ENCODE measurements at regions of chr12 and their contacts with region 1.

Region 1: DNA sequence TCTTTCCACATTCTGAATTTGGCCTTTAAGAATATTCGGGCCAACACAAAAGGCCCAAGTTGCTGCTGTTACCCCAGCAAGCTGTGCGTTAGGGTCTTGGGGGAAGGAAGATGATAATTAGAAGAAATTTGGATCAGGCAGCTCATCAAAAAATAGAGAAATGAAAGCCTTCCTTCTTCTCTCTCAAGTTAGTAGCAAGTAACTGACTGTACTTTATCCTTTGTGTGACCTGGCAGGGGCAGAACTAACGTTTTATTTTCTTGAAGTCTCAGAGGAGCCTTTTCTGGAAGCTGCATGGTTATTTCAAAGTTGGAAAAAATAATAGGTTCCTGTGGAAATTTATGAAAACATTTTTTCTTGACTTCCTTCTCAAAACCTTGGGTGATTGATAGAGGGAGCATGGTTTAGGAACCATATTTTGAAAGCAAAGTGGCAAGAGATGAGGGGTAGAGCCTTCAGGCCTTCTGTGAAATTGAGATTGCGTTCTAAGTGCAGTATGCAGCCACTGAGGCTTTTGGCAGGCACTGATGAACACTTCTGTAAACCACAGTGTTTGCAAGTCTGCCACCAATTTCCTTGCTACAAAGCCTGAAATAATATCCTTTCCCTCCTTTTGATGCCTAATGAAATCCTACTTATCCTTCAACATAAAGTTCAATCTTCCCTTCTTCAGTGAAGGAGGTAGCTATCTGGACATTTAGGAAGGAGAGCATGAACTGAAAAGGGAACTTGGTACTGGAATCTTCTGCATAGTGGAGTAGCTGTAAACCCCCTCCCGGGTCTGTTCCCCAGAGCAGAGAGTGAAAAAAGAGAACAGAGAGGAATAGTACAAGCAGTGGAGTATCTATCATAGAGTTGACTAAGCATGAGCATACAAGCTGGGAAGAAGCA is 123.2 kb downstream of the FGD4 start:
- DNase-seq: no peak
- H3K4me3 ChIP-seq: peak overlapping the region in 1 of 2 donors; percentile 15
- H3K27ac ChIP-seq: peak overlapping the region; percentile 63 to 83
- H3K4me1 ChIP-seq: peaks cover 0 to 32% of the 10 kb centered on the region in 2 donors
- H3K27me3 ChIP-seq: no peaks in the 10 kb centered on the region
- CTCF ChIP-seq: no peak

Region 2: GRCh38 chr12:32501835-32502333 is 20.7 kb before region 1 on chr12:
- intact Hi-C with region 1: loop called (anchors 2 kb)
- DNase-seq: no peak
- H3K4me3 ChIP-seq: peak overlapping the region in 1 of 2 donors; percentile 7
- H3K27ac ChIP-seq: peak overlapping the region; percentile 18 to 19
- H3K4me1 ChIP-seq: peaks cover 3 to 22% of the 10 kb centered on the region in 2 donors
- H3K27me3 ChIP-seq: no peaks in the 10 kb centered on the region
- CTCF ChIP-seq: no peak

Region 3: DNA sequence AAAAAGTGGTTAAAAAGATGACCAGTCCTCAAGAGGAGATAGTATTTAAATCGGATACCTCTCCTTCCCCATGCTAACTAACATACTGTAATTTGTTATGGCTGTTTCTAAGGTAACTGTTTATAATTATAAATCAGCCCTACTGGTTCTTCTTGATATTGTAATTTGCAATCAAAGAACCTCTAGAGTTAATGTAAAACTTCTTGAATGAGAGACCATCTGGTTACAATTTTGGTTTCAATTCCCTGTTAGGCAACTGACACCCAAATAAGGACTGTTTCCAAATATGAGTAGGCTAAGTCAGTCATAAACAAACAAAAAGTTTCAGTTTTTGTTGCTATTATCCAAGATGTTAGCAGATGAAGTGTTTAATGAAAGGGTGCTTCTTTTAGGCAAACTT is 36.3 kb after region 1 on chr12:
- intact Hi-C with region 1: no loop called
- DNase-seq: no peak
- H3K4me3 ChIP-seq: peak overlapping the region in 1 of 2 donors; percentile 6
- H3K27ac ChIP-seq: peak overlapping the region in 1 of 2 donors; percentile 42
- H3K4me1 ChIP-seq: peaks cover 0 to 8% of the 10 kb centered on the region in 2 donors
- H3K27me3 ChIP-seq: no peaks in the 10 kb centered on the region
- CTCF ChIP-seq: no peak